Heart left ventricle (tissue), 16 donors: ENCODE measurements at regions of chr1 and their contacts with region 1.

Region 1: GRCh38 chr1:222438661-222439060 is 109.2 kb downstream of the HHIPL2 start:
- DNase-seq: no peak
- ATAC-seq: no peak
- H3K4me3 ChIP-seq: no peak overlapping the region
- H3K27ac ChIP-seq: no peak overlapping the region
- H3K4me1 ChIP-seq: peaks cover 0 to 9% (median 0%) of the 10 kb centered on the region in 12 donors
- H3K27me3 ChIP-seq: no peaks in the 10 kb centered on the region
- CTCF ChIP-seq: no peak
- POLR2A ChIP-seq: no peak

Region 2: GRCh38 chr1:222187566-222188332 is 250.9 kb before region 1 on chr1:
- intact Hi-C with region 1: loop called in 1 of 10 experiments (anchors 5 kb)
- DNase-seq: no peak
- ATAC-seq: no peak
- H3K4me3 ChIP-seq: no peak overlapping the region
- H3K27ac ChIP-seq: no peak overlapping the region
- H3K4me1 ChIP-seq: no peaks in the 10 kb centered on the region
- H3K27me3 ChIP-seq: no peaks in the 10 kb centered on the region
- CTCF ChIP-seq: no peak
- POLR2A ChIP-seq: no peak